ENCODE measurements at regions of chr7 and their contacts with region 1.

Region 1: DNA sequence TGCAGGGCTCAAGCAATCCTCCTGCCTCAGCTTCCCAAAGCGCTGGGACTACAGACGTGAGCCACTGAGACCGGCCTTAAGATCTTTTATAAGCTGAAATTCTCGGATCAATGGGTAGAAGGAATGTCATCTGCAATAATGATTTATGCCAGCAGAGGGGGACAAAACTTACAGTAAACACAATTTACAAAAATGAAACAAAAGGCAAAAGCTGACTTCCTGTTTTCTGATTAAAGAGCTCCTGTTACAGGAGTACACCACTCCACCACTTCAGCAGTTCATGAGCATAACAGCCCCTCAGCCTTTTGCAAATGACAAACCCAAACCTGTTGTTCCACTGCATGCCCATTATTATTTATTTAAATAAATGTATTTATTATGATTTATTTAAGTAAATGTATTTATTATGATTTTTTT is 88.5 kb upstream of the ATP6V0A4 start:
- DNase-seq: peak; percentile 56
- ATAC-seq: peak; percentile 67
- H3K4me3 ChIP-seq: no peak overlapping the region
- H3K27ac ChIP-seq: no peak overlapping the region
- H3K4me1 ChIP-seq: 0 out of 4 replicates have a peak, but pooled peaks cover 0 to 3% of the 10 kb centered on the region in 2 experiments
- H3K27me3 ChIP-seq: no peaks in the 10 kb centered on the region
- CTCF ChIP-seq: peak; percentile 62 to 66 (median 64); a peak in 5 of 6 replicates
- POLR2A ChIP-seq: no peak
- RAD21 ChIP-seq: peak; percentile 80

Region 2: DNA sequence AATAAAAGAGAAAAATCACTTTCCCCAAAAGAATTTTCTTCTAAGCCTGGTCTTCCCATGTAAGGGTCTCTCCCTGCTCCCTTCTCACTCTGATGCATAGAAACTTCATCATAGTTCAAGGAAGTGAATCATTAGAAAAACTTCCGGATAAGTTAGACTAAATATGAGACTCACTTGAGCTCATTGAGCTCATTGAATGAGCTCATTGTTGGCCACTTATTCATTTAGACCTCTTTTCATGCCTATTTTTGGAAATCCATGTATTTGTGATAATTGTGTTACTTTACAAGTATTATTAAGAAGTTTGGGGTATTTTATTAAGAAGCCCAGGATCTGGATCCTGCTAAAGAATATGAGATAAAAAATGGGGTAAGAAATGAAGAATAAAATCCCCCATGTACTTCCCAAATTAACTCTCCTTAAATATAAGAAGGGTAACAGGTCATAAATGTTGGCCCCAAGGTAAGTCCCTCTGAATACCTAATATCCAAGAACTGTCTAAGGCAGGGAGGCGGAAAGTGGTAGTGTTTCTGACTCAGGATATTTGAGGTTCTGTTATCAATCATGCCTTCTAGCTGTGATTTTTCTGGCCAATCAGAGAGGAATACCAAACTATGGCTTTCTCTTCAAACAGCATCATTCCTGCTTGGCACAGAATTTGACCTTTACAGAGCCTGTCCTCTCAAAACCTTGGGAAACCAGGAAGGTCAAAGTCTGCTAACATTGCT is 1306.4 kb before region 1 on chr7:
- CTCF ChIA-PET with region 1: no interaction called
- POLR2A ChIA-PET with region 1: no interaction called
- RAD21 ChIA-PET with region 1: no interaction called
- intact Hi-C with region 1: no loop called
- DNase-seq: no peak
- ATAC-seq: no peak
- H3K4me3 ChIP-seq: no peak overlapping the region
- H3K27ac ChIP-seq: no peak overlapping the region
- H3K4me1 ChIP-seq: peaks cover 0 to 15% of the 10 kb centered on the region in 2 experiments; a peak in 2 of 4 replicates
- H3K27me3 ChIP-seq: no peaks in the 10 kb centered on the region
- CTCF ChIP-seq: no peak
- POLR2A ChIP-seq: no peak
- RAD21 ChIP-seq: no peak

Region 3: DNA sequence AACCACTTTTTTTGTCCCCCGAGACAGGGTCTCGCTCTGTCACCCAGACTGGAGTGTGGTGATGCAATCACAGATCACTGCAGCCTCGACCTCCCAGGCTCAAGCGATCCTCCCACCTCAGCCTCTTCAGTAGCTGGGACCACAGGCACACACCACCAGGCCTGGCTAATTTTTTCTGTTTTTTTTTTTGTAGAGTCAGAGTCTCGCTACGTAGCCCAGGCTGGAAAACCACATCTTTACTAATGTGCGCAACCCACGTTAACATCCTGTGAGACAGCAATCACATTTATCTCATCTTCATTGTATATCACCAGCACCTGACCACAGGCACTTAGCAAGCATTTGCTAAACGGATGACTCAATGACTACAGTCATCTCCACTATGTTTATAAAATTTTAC is 10.7 kb before region 1 on chr7:
- CTCF ChIA-PET with region 1: interaction called, 19 read pairs
- POLR2A ChIA-PET with region 1: no interaction called
- RAD21 ChIA-PET with region 1: interaction called in 1 of 2 experiments, 3 read pairs
- intact Hi-C with region 1: no loop called
- DNase-seq: no peak
- ATAC-seq: peak; percentile 31; the same call in 1 of the 2 replicates
- H3K4me3 ChIP-seq: no peak overlapping the region
- H3K27ac ChIP-seq: no peak overlapping the region
- H3K4me1 ChIP-seq: peaks cover 9 to 16% of the 10 kb centered on the region in 2 experiments
- H3K27me3 ChIP-seq: no peaks in the 10 kb centered on the region
- CTCF ChIP-seq: no peak
- POLR2A ChIP-seq: no peak
- RAD21 ChIP-seq: no peak

Region 4: GRCh38 chr7:138948108-138948802 is 61.7 kb after region 1 on chr7:
- CTCF ChIA-PET with region 1: no interaction called
- POLR2A ChIA-PET with region 1: no interaction called
- RAD21 ChIA-PET with region 1: no interaction called
- intact Hi-C with region 1: no loop called
- DNase-seq: no peak
- ATAC-seq: no peak
- H3K4me3 ChIP-seq: no peak overlapping the region
- H3K27ac ChIP-seq: no peak overlapping the region
- H3K4me1 ChIP-seq: no peaks in the 10 kb centered on the region
- H3K27me3 ChIP-seq: no peaks in the 10 kb centered on the region
- CTCF ChIP-seq: no peak
- POLR2A ChIP-seq: no peak
- RAD21 ChIP-seq: no peak

Region 5: DNA sequence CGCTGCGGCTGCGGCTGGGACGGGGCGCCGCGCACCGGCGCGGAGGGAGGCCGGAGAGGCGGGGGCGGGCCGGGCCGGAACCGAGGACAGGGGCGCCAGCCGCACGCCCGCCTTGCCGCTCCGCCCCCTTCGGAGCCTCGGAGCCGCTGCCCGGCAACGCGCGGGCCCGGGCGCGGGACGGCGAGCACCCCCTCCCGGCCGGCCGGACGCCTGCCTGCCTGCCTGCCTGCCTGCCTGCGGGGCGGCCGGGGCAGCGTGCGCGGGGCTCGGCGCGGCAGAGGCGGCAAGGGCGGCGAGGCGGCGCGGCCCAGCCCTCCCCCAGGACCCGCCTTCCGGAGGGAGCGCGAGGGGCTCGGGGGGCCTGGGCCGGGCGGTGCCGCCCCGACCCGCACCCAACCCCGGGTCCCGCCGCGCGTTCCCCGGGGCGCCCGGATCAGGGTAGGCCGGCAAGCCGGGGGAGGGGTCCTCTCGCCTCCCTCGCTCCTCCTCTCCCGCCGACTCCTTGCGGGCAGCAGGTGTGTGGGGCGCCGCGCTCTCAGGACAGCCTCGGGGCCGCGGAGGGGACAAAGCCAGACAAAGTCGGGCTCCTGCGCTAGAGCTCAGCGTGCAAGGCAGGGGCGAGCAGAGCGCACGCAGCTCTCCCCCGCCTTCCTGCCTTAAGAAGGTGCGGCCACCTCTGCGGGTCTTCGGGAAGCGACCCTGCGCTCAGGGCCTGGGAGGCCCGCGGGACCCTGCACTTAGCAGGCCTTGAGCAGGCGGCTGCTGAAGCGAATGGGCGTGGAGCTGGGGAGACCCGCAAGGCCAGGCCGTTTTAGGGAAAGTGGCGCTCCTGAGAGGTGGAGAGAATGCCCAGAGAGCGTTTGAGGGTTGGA is 95.1 kb after region 1 on chr7 and contains the start of gene KIAA1549:
- CTCF ChIA-PET with region 1: interaction called, 5 read pairs
- POLR2A ChIA-PET with region 1: interaction called, 3 read pairs
- RAD21 ChIA-PET with region 1: no interaction called
- intact Hi-C with region 1: loop called (anchors 2 kb)
- DNase-seq: peak; percentile 12
- ATAC-seq: peak; percentile 89
- H3K4me3 ChIP-seq: peak within 1 kb of the TSS; percentile 61 to 74
- H3K27ac ChIP-seq: peak within 1 kb of the TSS; percentile 61; the same call in 1 of the 2 replicates
- H3K4me1 ChIP-seq: peaks cover 3 to 36% of the 10 kb centered on the region in 2 experiments; a peak in 3 of 4 replicates
- H3K27me3 ChIP-seq: no peaks in the 10 kb centered on the region
- CTCF ChIP-seq: no peak
- POLR2A ChIP-seq: no peak
- RAD21 ChIP-seq: no peak
- total RNA-seq, gene KIAA1549: 3.9 TPM

Region 6: GRCh38 chr7:139016931-139017511 is 130.5 kb after region 1 on chr7:
- CTCF ChIA-PET with region 1: interaction called, 11 read pairs
- POLR2A ChIA-PET with region 1: no interaction called
- RAD21 ChIA-PET with region 1: no interaction called
- intact Hi-C with region 1: no loop called
- DNase-seq: peak; percentile 54
- ATAC-seq: peak; percentile 96
- H3K4me3 ChIP-seq: no peak overlapping the region
- H3K27ac ChIP-seq: no peak overlapping the region
- H3K4me1 ChIP-seq: no peaks in the 10 kb centered on the region
- H3K27me3 ChIP-seq: no peaks in the 10 kb centered on the region
- CTCF ChIP-seq: peak; percentile 64 to 71 (median 69)
- POLR2A ChIP-seq: no peak
- RAD21 ChIP-seq: peak; percentile 82

Region 7: GRCh38 chr7:139075031-139075652 is 188.6 kb after region 1 on chr7:
- CTCF ChIA-PET with region 1: interaction called, 29 read pairs
- POLR2A ChIA-PET with region 1: no interaction called
- RAD21 ChIA-PET with region 1: interaction called in 1 of 2 experiments, 5 read pairs
- intact Hi-C with region 1: loop called (anchors 1 kb)
- DNase-seq: peak; percentile 56
- ATAC-seq: peak; percentile 97
- H3K4me3 ChIP-seq: no peak overlapping the region
- H3K27ac ChIP-seq: no peak overlapping the region
- H3K4me1 ChIP-seq: 0 out of 4 replicates have a peak, but pooled peaks cover 0 to 3% of the 10 kb centered on the region in 2 experiments
- H3K27me3 ChIP-seq: no peaks in the 10 kb centered on the region
- CTCF ChIP-seq: peak; percentile 68 to 89 (median 76)
- POLR2A ChIP-seq: no peak
- RAD21 ChIP-seq: peak; percentile 79

Measured in HCT116 (cell line).